ENCODE measurements at regions of chrX and their contacts with region 1.

Region 1: GRCh38 chrX:151396825-151397740 is at the start of gene VMA21:
- DNase-seq: peak; percentile 55 to 92 (median 76)
- ATAC-seq: peak; percentile 70
- H3K4me3 ChIP-seq: peak within 1 kb of the TSS; percentile 85
- H3K4me3 Mint-ChIP-seq: peak within 1 kb of the TSS; percentile 89
- H3K27ac ChIP-seq: peak within 1 kb of the TSS; percentile 88 to 94
- H3K27ac Mint-ChIP-seq: peak within 1 kb of the TSS; percentile 99
- H3K4me1 ChIP-seq: peaks cover 48% of the 10 kb centered on the region
- H3K4me1 Mint-ChIP-seq: peaks cover 77% of the 10 kb centered on the region
- H3K27me3 ChIP-seq: no peaks in the 10 kb centered on the region
- H3K27me3 Mint-ChIP-seq: no peaks in the 10 kb centered on the region
- CTCF ChIP-seq: no peak
- total RNA-seq, gene VMA21: 19.3 to 19.4 TPM

Region 2: DNA sequence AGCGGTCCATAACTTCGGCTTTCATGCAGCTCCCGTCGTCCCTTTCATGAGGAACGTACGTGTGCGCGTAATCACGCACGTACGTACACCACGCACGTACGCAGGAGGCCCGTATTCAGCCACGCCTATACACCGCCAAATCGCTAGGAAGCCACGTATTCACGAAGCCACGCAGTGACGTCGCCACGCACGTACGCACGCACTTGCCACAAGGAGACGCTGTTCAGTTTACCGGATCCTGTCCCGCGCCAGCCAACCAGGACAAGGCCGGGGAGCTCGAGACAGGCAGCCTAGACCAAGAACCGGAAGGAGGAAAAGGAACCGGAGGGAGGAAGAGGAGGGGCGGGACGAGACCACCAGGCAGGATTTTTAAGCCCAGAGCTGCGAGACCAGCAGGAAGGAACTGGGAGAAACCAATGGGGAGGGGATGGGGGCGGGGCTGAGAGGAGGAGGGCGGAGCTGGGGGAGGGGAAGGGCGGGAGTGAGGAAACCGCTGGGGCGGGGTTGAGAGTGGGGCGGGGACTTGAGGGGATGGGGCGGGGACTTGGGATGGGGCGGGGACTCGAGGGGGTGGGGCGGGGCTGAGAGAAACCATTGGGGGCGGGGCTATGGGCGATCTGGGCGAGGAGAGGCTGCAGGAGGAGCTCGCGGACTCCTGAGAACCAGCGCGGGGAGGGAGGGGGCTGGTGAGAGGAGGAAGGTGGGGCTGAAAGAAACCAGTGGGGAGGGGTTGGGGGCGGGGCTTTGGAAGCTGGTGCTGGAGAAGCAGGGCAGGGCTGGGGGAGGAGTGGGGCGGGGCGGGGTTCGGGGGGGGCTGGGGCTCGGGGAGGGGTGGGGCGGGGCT is 1458.4 kb before region 1 on chrX and contains the start of gene EOLA2:
- CTCF ChIA-PET with region 1: no interaction called
- POLR2A ChIA-PET with region 1: interaction called, 11 read pairs
- intact Hi-C with region 1: no loop called
- DNase-seq: peak; percentile 83 to 98 (median 90)
- ATAC-seq: peak; percentile 47
- H3K4me3 ChIP-seq: peak within 1 kb of the TSS; percentile 93
- H3K4me3 Mint-ChIP-seq: peak within 1 kb of the TSS; percentile 94
- H3K27ac ChIP-seq: peak within 1 kb of the TSS; percentile 82 to 97
- H3K27ac Mint-ChIP-seq: peak within 1 kb of the TSS; percentile 84
- H3K4me1 ChIP-seq: peaks cover 15% of the 10 kb centered on the region
- H3K4me1 Mint-ChIP-seq: no peaks in the 10 kb centered on the region
- H3K27me3 ChIP-seq: no peaks in the 10 kb centered on the region
- H3K27me3 Mint-ChIP-seq: no peaks in the 10 kb centered on the region
- CTCF ChIP-seq: peak; percentile 34
- total RNA-seq, gene EOLA2: 48.7 to 54.7 TPM

Region 3: DNA sequence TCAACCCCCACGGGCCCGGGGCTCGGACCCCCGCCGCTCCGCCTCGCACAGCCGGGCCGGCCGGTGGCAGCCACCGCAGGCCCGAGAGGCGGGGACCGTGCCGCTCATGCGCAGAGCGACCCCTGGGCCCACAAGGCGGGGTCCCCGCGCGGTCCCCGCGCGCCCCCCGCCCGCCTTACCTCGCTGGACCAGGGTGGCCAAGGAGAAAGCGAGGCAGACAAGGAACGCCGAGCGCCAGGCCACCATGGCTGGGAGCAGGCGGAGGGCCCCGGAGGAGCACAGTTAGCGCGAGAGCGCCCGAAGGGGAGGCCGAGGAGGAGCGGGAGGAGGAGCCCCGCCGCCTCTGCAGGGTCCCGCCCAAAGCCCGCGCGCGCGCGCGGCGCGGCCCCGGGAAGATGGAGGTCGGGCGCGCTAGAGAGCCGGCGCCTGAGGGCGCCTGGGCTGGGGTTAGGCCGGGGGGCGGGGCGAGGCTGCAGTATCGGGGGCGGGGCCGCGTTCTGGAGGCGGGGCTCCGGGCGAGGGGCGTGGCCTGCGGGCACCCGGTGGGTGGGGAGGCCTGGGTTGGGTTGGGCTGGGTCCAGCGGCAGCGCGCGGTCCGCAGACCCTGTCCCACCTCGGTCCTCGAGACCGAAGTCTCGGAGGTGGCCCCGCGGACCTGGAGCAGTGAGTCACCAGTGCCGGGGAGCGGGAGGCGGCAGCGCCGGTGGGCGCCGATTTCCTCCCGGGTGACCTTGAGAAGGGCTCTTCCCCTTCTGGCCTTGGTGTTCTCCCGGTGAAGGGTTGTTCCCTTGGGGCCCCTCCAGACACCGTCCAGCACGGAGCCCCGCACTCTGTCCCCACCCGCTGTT is 498.5 kb before region 1 on chrX and contains the start of gene CD99L2:
- CTCF ChIA-PET with region 1: no interaction called
- POLR2A ChIA-PET with region 1: no interaction called
- intact Hi-C with region 1: loop called in 1 of 2 experiments (anchors 5 kb)
- DNase-seq: peak; percentile 82 to 94 (median 88)
- ATAC-seq: peak; percentile 91
- H3K4me3 ChIP-seq: peak within 1 kb of the TSS; percentile 79
- H3K4me3 Mint-ChIP-seq: peak within 1 kb of the TSS; percentile 96
- H3K27ac ChIP-seq: no peak within 1 kb of the TSS
- H3K27ac Mint-ChIP-seq: peak within 1 kb of the TSS; percentile 76
- H3K4me1 ChIP-seq: peaks cover 12% of the 10 kb centered on the region
- H3K4me1 Mint-ChIP-seq: peaks cover 15% of the 10 kb centered on the region
- H3K27me3 ChIP-seq: no peaks in the 10 kb centered on the region
- H3K27me3 Mint-ChIP-seq: no peaks in the 10 kb centered on the region
- CTCF ChIP-seq: no peak
- total RNA-seq, gene CD99L2: 5.3 to 6.5 TPM

Region 4: DNA sequence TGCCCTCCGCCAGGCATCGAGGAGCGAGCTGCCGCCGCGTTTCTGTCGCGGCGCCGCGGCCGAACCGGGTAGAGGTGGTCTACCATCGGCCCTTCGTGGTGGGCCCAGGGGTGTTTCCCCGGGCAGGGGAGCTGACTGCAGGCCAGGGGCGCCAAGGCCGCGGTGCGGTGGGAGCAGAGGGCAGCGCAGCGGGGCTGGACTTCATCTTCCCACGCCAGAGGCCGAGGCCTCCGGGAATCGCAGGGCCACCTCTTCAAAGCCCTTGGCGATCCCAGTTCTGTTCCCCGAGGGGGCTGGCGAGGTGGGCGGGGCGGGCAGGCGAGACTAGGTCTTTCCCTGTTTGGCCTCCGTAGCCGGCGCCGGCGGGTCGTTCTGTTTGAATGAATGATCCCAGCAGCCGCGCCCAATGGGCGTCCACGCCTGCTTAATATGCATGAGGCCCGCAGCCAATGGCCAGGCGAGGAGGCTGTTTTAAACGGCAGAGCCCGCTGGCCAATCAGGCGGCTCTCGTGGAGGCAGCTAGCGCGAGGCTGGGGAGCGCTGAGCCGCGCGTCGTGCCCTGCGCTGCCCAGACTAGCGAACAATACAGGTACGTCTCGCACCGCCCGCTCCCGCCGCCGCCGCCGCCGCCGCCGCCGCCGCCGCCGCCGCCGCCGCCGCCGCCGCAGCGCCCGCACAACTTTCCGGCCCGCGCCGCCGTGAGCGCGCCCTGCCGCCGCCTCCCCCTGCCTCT is 414.1 kb before region 1 on chrX and contains the start of gene HMGB3:
- CTCF ChIA-PET with region 1: no interaction called
- POLR2A ChIA-PET with region 1: no interaction called
- intact Hi-C with region 1: loop called in 1 of 2 experiments (anchors 10 kb)
- DNase-seq: peak; percentile 44 to 89 (median 68)
- ATAC-seq: peak; percentile 98
- H3K4me3 ChIP-seq: peak within 1 kb of the TSS; percentile 59
- H3K4me3 Mint-ChIP-seq: peak within 1 kb of the TSS; percentile 87
- H3K27ac ChIP-seq: no peak within 1 kb of the TSS
- H3K27ac Mint-ChIP-seq: no peak within 1 kb of the TSS
- H3K4me1 ChIP-seq: peaks cover 14% of the 10 kb centered on the region
- H3K4me1 Mint-ChIP-seq: peaks cover 7% of the 10 kb centered on the region
- H3K27me3 ChIP-seq: peaks cover 0 to 9% of the 10 kb centered on the region in 2 experiments
- H3K27me3 Mint-ChIP-seq: peaks cover 17% of the 10 kb centered on the region
- CTCF ChIP-seq: no peak
- total RNA-seq, gene HMGB3: 4.0 to 5.4 TPM

Region 5: GRCh38 chrX:151448509-151448908 is 51.4 kb after region 1 on chrX:
- CTCF ChIA-PET with region 1: no interaction called
- POLR2A ChIA-PET with region 1: no interaction called
- intact Hi-C with region 1: no loop called
- DNase-seq: no peak
- ATAC-seq: no peak
- H3K4me3 ChIP-seq: no peak overlapping the region
- H3K4me3 Mint-ChIP-seq: no peak overlapping the region
- H3K27ac ChIP-seq: no peak overlapping the region
- H3K27ac Mint-ChIP-seq: no peak overlapping the region
- H3K4me1 ChIP-seq: no peaks in the 10 kb centered on the region
- H3K4me1 Mint-ChIP-seq: no peaks in the 10 kb centered on the region
- H3K27me3 ChIP-seq: no peaks in the 10 kb centered on the region
- H3K27me3 Mint-ChIP-seq: peaks cover 6% of the 10 kb centered on the region
- CTCF ChIP-seq: no peak

Region 6: GRCh38 chrX:152061083-152061482 is 664.0 kb after region 1 on chrX:
- CTCF ChIA-PET with region 1: no interaction called
- POLR2A ChIA-PET with region 1: no interaction called
- intact Hi-C with region 1: no loop called
- DNase-seq: no peak
- ATAC-seq: no peak
- H3K4me3 ChIP-seq: no peak overlapping the region
- H3K4me3 Mint-ChIP-seq: no peak overlapping the region
- H3K27ac ChIP-seq: no peak overlapping the region
- H3K27ac Mint-ChIP-seq: no peak overlapping the region
- H3K4me1 ChIP-seq: no peaks in the 10 kb centered on the region
- H3K4me1 Mint-ChIP-seq: no peaks in the 10 kb centered on the region
- H3K27me3 ChIP-seq: no peaks in the 10 kb centered on the region
- H3K27me3 Mint-ChIP-seq: no peaks in the 10 kb centered on the region
- CTCF ChIP-seq: no peak

Region 7: GRCh38 chrX:152830312-152831305 is 1433.5 kb after region 1 on chrX and contains the starts of genes CETN2 and NSDHL:
- CTCF ChIA-PET with region 1: no interaction called
- POLR2A ChIA-PET with region 1: interaction called, 4 read pairs
- intact Hi-C with region 1: loop called in 1 of 2 experiments (anchors 5 kb)
- DNase-seq: peak; percentile 87 to 96 (median 91)
- ATAC-seq: peak; percentile 97
- H3K4me3 ChIP-seq: peak within 1 kb of the TSS; percentile 78
- H3K4me3 Mint-ChIP-seq: peak within 1 kb of the TSS; percentile 94
- H3K27ac ChIP-seq: peak within 1 kb of the TSS; percentile 53 to 62
- H3K27ac Mint-ChIP-seq: peak within 1 kb of the TSS; percentile 89
- H3K4me1 ChIP-seq: peaks cover 22% of the 10 kb centered on the region
- H3K4me1 Mint-ChIP-seq: peaks cover 36% of the 10 kb centered on the region
- H3K27me3 ChIP-seq: no peaks in the 10 kb centered on the region
- H3K27me3 Mint-ChIP-seq: no peaks in the 10 kb centered on the region
- CTCF ChIP-seq: no peak
- total RNA-seq, gene CETN2: 4.0 to 5.1 TPM
- total RNA-seq, gene NSDHL: 2.7 to 2.9 TPM

Measured in CD4-positive, alpha-beta T cell (primary cell).